A673 (cell line): ENCODE measurements at regions of chr13 and their contacts with region 1.

Region 1: GRCh38 chr13:49976314-49977258 is 20.3 kb upstream of the TRIM13 start:
- DNase-seq: peak; percentile 79
- H3K4me3 ChIP-seq: no peak overlapping the region
- H3K27ac ChIP-seq: peak overlapping the region; percentile 14
- H3K4me1 ChIP-seq: peaks cover 13% of the 10 kb centered on the region
- H3K27me3 ChIP-seq: no peaks in the 10 kb centered on the region
- CTCF ChIP-seq: peak; percentile 93

Region 2: GRCh38 chr13:49792550-49793324 is 183.8 kb before region 1 on chr13 and contains the start of gene KPNA3:
- CTCF ChIA-PET with region 1: no interaction called
- POLR2A ChIA-PET with region 1: interaction called, 16 read pairs
- intact Hi-C with region 1: no loop called
- DNase-seq: peak; percentile 99
- H3K4me3 ChIP-seq: peak within 1 kb of the TSS; percentile 93
- H3K27ac ChIP-seq: peak within 1 kb of the TSS; percentile 95
- H3K4me1 ChIP-seq: peaks cover 9% of the 10 kb centered on the region
- H3K27me3 ChIP-seq: no peaks in the 10 kb centered on the region
- CTCF ChIP-seq: no peak
- total RNA-seq, gene KPNA3: 55.9 and 62.0 TPM in 2 replicates

Region 3: GRCh38 chr13:50081679-50082425 is 105.3 kb after region 1 on chr13:
- CTCF ChIA-PET with region 1: no interaction called
- POLR2A ChIA-PET with region 1: no interaction called
- intact Hi-C with region 1: loop called (anchors 5 kb)
- DNase-seq: peak; percentile 99
- H3K4me3 ChIP-seq: peak overlapping the region; percentile 87
- H3K27ac ChIP-seq: peak overlapping the region; percentile 98
- H3K4me1 ChIP-seq: peaks cover 27% of the 10 kb centered on the region
- H3K27me3 ChIP-seq: no peaks in the 10 kb centered on the region
- CTCF ChIP-seq: peak; percentile 43

Region 4: DNA sequence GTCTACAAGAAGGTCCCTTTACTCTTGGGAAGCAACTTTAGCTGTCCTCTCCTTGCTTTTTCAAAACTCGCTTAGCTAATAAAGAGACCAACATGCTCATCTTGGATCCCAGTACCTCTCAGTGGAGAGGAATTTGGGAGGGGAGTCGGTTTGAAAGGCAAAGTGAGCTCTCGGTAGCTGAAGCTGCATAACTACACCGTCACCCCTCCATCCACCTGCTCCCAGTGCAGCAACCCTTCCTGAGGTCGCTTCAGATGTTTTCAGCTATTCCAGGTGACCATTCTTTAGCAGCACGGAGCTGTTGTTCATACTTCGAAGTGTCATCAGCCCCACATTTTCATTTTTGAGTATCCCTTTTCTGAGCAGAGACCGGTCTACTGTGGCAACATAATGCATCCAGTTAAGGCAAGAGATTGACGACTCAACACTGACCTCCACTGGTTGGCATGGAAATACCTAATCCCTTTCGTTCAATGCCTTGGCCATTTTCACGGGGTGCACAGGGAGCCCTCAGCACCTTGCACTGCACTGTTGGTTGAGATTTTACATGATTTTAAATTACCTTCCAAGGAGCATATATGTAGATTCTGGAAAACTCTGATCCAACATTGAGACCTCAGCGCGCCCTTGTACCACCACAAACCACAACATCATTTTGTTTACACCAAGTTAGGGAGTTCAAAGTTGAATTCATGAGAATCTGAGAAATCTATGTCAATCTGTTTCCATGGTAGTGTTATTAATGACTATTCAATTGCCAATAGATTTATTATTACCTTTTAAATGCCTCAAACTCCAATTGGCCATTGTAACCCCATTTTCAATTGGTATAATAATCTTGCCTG is 824.7 kb after region 1 on chr13:
- CTCF ChIA-PET with region 1: interaction called, 5 read pairs
- POLR2A ChIA-PET with region 1: no interaction called
- intact Hi-C with region 1: loop called (anchors 2 kb)
- DNase-seq: peak; percentile 76
- H3K4me3 ChIP-seq: no peak overlapping the region
- H3K27ac ChIP-seq: no peak overlapping the region
- H3K4me1 ChIP-seq: no peaks in the 10 kb centered on the region
- H3K27me3 ChIP-seq: no peaks in the 10 kb centered on the region
- CTCF ChIP-seq: peak; percentile 79

Region 5: DNA sequence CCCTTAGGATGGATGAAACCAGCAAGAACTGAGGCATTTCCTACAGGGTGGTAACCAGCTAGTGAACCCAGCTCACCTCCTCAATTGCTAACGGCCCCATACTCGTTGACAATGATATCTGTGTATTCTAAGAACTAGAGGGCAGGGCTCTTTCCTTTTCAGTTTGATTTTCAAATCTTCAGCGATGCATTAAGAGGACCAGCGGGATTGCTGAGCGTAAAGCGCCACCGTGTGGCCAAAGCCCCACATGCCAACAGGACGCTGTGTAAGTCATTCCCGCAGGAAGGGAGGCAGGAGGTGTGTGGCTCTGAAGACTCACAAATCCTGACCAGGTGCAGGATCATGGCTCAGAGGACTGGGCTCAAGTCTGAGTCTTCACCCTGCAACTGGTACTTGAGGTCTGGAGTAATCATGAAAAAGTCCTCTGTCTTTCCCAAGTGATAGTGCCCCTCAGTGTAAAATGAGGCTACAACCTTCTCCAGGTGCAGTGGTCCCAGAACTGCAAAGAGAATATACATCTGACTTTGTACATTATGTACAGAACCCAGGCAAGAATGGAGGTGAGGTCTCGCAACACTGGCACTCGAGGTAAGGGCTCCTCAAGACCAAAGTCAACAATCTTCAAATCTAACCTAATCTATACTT is 1093.5 kb after region 1 on chr13:
- CTCF ChIA-PET with region 1: no interaction called
- POLR2A ChIA-PET with region 1: no interaction called
- intact Hi-C with region 1: loop called (anchors 1 kb)
- DNase-seq: peak; percentile 85
- H3K4me3 ChIP-seq: no peak overlapping the region
- H3K27ac ChIP-seq: no peak overlapping the region
- H3K4me1 ChIP-seq: no peaks in the 10 kb centered on the region
- H3K27me3 ChIP-seq: no peaks in the 10 kb centered on the region
- CTCF ChIP-seq: peak; percentile 91